ENCODE measurements at regions of chr5 and their contacts with region 1.

Region 1: GRCh38 chr5:39005566-39006232 is 68.5 kb downstream of the RICTOR start:
- DNase-seq: no peak
- ATAC-seq: no peak
- H3K4me3 Mint-ChIP-seq: no peak overlapping the region
- H3K27ac Mint-ChIP-seq: no peak overlapping the region
- H3K4me1 Mint-ChIP-seq: peaks cover 5% of the 10 kb centered on the region
- H3K27me3 Mint-ChIP-seq: no peaks in the 10 kb centered on the region
- CTCF ChIP-seq: no peak

Region 2: GRCh38 chr5:38622723-38623129 is 383.0 kb before region 1 on chr5:
- CTCF ChIA-PET with region 1: no interaction called
- POLR2A ChIA-PET with region 1: no interaction called
- intact Hi-C with region 1: no loop called
- DNase-seq: no peak
- ATAC-seq: no peak
- H3K4me3 Mint-ChIP-seq: no peak overlapping the region
- H3K27ac Mint-ChIP-seq: no peak overlapping the region
- H3K4me1 Mint-ChIP-seq: no peaks in the 10 kb centered on the region
- H3K27me3 Mint-ChIP-seq: no peaks in the 10 kb centered on the region
- CTCF ChIP-seq: no peak

Region 3: DNA sequence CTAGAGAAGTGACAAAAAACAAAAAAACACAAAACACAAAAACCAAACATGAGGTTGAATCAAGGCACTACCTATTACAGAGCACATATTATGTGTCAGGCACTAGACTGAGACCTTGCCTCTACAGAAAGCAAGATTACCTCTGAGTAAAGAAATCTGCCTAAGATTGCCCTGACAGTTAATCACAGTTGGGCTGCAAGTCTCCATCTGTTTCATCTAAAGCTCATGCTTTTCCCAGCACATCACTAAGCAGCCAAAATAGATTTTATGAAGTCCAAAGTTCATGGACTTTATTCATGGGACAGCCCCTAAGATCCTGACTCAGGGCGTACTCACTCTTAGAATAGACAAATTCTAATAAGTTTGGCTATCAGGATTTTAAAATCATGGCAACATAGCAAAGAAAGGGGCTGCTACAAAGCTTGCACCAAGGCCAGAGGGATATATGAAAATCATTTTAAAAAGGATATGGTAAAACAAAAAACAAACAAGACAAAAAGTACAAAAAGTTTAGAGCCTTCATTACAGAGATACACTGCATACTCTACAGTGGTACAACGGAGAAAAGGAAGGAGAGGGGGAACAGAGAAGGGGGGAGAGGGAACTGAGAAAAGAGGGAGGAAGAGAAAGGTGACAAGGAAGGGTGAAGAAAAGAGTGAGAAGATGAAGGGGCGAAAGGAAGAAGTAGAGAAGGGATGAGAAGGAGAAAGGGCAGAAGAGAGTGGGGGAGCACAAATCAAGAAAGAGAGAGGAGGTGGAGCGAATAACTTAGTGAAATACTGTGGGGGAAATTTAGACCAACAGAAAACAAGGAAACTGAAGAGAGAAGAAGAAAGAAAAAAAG is 10.3 kb after region 1 on chr5:
- CTCF ChIA-PET with region 1: no interaction called
- POLR2A ChIA-PET with region 1: no interaction called
- intact Hi-C with region 1: loop called (anchors 2 kb)
- DNase-seq: no peak
- ATAC-seq: no peak
- H3K4me3 Mint-ChIP-seq: no peak overlapping the region
- H3K27ac Mint-ChIP-seq: peak overlapping the region; percentile 73
- H3K4me1 Mint-ChIP-seq: peaks cover 12% of the 10 kb centered on the region
- H3K27me3 Mint-ChIP-seq: no peaks in the 10 kb centered on the region
- CTCF ChIP-seq: no peak

Region 4: DNA sequence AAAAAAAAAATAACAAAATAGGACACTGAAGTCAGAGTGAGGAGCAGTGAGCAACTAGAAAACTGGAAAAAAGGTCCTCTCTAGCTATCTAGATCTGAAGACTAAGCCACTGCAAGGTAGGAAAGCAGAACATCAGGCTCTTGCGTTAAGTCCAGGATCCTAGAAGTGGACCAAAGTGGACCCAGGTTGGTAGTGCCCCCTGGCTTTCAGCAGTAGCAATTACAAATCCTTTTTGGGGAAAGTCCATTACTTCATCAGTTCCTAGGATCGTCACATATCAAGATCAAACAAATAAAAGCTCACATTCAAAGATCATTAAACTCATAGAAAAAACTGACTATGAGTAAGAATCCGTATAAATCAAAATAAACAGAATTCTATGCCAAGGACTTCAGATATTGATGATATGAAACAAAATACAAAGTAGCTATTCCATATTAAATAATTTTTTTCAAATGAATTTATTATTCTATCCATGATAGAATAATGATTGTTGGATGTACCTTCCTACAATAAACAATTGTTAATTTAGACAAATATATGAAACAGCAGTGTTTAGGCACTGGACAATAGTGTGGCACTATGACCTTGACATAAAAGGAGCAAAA is 75.0 kb after region 1 on chr5:
- CTCF ChIA-PET with region 1: interaction called, 20 read pairs
- POLR2A ChIA-PET with region 1: interaction called, 3 read pairs
- intact Hi-C with region 1: loop called (anchors 2 kb)
- DNase-seq: no peak
- ATAC-seq: no peak
- H3K4me3 Mint-ChIP-seq: no peak overlapping the region
- H3K27ac Mint-ChIP-seq: no peak overlapping the region
- H3K4me1 Mint-ChIP-seq: peaks cover 24% of the 10 kb centered on the region
- H3K27me3 Mint-ChIP-seq: no peaks in the 10 kb centered on the region
- CTCF ChIP-seq: no peak

Region 5: GRCh38 chr5:39106322-39106721 is 100.6 kb after region 1 on chr5:
- CTCF ChIA-PET with region 1: interaction called, 3 read pairs
- POLR2A ChIA-PET with region 1: no interaction called
- intact Hi-C with region 1: loop called (anchors 1 kb)
- DNase-seq: no peak
- ATAC-seq: no peak
- H3K4me3 Mint-ChIP-seq: no peak overlapping the region
- H3K27ac Mint-ChIP-seq: no peak overlapping the region
- H3K4me1 Mint-ChIP-seq: peaks cover 4% of the 10 kb centered on the region
- H3K27me3 Mint-ChIP-seq: no peaks in the 10 kb centered on the region
- CTCF ChIP-seq: no peak

Measured in activated B cell treated with CpG ODN at 0.5 μM for 24 hours (primary cell).